Sigmoid colon (tissue), 7 donors: ENCODE measurements at regions of chr22 and their contacts with region 1.

Region 1: GRCh38 chr22:35742342-35743100 is 24.8 kb downstream of the APOL5 start:
- DNase-seq: no peak
- H3K4me3 ChIP-seq: no peak overlapping the region
- H3K27ac ChIP-seq: peak overlapping the region in 1 of 4 donors; percentile 16
- H3K4me1 ChIP-seq: peaks cover 0 to 18% (median 13%) of the 10 kb centered on the region in 4 donors
- H3K27me3 ChIP-seq: no peaks in the 10 kb centered on the region
- CTCF ChIP-seq: no peak
- EP300 ChIP-seq: no peak
- POLR2A ChIP-seq: no peak

Region 2: GRCh38 chr22:35914665-35915476 is 172.3 kb after region 1 on chr22:
- intact Hi-C with region 1: loop called (anchors 5 kb)
- DNase-seq: peak; percentile 83
- H3K4me3 ChIP-seq: peak overlapping the region; percentile 18 to 51 (median 46)
- H3K27ac ChIP-seq: peak overlapping the region; percentile 80 to 87 (median 86)
- H3K4me1 ChIP-seq: peaks cover 0 to 95% (median 79%) of the 10 kb centered on the region in 4 donors
- H3K27me3 ChIP-seq: no peaks in the 10 kb centered on the region
- CTCF ChIP-seq: no peak
- EP300 ChIP-seq: no peak
- POLR2A ChIP-seq: no peak